ENCODE measurements at regions of chr2 and their contacts with region 1.

Region 1: GRCh38 chr2:135913727-135914365 is 37.6 kb upstream of the MCM6 start:
- DNase-seq: peak in 5 of 7 donors; percentile 18 to 62 (median 36)
- H3K4me3 ChIP-seq: no peak overlapping the region
- H3K27ac ChIP-seq: no peak overlapping the region
- H3K4me1 ChIP-seq: no peaks in the 10 kb centered on the region
- H3K27me3 ChIP-seq: no peaks in the 10 kb centered on the region
- CTCF ChIP-seq: peak; percentile 67 to 83 (median 74)
- POLR2A ChIP-seq: no peak

Region 2: DNA sequence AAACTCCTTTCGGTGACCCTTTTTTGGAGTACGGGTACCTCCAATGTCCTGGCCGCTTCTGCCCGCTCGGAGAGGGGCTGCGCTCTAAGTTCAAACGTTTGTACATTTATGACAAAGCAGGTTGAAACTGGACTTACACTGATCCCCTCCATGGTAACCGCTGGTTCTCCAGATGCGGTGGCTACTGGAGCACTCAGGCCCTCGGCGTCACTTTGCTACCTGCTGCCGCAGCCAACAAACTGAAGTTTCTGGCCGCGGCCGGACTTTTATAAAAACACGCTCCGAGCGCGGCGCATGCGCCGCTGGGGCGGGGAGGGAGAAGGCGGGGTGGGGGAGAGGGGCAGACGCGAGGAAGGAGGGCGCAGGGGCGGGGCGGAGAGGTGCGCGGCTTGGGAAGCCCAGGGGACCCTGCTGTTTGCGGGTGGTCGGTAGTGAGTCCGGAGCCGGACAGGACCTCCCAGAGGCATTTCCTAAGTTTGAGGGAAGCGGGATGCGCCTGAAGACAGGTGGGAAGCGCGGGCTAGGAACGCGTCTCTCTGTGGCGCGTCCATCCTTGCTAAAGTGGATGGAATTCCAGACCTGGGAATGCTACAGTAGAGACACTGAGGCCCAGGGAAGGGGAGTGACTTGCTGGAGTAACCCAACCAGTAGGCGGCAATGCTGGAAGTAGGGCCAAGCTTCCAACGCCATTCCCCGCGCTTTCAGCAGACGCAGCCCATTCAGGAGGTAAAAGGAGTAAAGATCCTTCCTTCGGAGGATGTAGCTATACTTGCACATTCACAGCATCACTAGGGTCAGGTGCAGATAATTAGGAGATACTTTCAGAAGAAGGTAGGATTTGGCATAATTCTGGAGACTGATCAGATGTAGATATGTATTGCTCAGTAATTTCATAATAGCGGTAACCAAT is 204.3 kb after region 1 on chr2 and contains the start of gene CXCR4:
- intact Hi-C with region 1: loop called in 1 of 2 experiments (anchors 10 kb)
- DNase-seq: peak; percentile 76 to 89 (median 81)
- H3K4me3 ChIP-seq: peak within 1 kb of the TSS; percentile 7 to 74 (median 59)
- H3K27ac ChIP-seq: peak within 1 kb of the TSS in 4 of 5 donors; percentile 36 to 75 (median 54)
- H3K4me1 ChIP-seq: peaks cover 10 to 37% of the 10 kb centered on the region in 2 donors
- H3K27me3 ChIP-seq: no peaks in the 10 kb centered on the region
- CTCF ChIP-seq: peak in 2 of 6 experiments; percentile 18 to 25
- POLR2A ChIP-seq: peak; percentile 83 to 94
- total RNA-seq, gene CXCR4: 21.9 to 344 (median 72.8) TPM

Region 3: DNA sequence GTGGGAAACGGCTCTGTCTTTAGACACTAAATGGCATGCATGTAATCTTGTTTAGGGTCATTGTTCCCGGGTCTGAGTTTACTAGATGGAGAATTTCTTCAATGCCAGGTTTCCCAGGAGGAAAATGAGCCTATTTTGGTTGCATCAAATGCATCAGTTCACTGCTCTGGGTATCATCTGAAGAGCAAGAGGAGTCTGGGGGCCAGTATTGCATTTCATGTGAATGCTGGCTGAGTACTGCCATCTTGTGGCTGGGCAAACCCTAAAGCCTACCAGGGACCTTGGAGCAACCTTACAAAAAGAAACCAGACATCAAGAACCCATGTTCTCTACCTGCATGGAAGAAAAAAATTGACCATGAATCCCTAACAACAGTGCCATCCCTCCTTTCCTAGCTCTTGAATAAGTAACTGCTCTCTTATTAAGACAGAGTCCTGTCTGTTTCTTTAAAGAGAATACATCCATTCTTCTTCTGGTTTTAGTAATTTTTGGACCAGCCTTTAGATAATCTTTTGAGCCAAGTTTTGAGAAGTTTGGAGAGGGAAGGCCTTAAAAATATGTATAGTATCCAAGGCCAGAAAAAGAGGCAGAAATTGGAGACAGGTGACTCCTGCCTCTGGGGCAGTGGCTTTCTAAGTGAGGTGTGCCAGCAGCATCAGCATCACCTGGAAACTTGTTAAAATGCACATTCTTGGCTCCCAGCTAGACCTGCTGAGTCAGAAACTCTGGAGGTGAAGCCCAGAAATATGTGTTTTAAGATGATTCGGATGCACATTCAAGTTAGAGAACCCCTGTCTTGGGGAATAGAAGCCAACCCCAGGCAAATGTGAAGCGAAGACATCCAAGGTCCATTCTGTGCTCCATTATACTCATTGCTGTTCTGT is 465.1 kb after region 1 on chr2:
- intact Hi-C with region 1: loop called (anchors 5 kb)
- DNase-seq: peak; percentile 63 to 83 (median 68)
- H3K4me3 ChIP-seq: no peak overlapping the region
- H3K27ac ChIP-seq: no peak overlapping the region
- H3K4me1 ChIP-seq: no peaks in the 10 kb centered on the region
- H3K27me3 ChIP-seq: no peaks in the 10 kb centered on the region
- CTCF ChIP-seq: peak; percentile 66 to 82 (median 76)
- POLR2A ChIP-seq: no peak

Region 4: DNA sequence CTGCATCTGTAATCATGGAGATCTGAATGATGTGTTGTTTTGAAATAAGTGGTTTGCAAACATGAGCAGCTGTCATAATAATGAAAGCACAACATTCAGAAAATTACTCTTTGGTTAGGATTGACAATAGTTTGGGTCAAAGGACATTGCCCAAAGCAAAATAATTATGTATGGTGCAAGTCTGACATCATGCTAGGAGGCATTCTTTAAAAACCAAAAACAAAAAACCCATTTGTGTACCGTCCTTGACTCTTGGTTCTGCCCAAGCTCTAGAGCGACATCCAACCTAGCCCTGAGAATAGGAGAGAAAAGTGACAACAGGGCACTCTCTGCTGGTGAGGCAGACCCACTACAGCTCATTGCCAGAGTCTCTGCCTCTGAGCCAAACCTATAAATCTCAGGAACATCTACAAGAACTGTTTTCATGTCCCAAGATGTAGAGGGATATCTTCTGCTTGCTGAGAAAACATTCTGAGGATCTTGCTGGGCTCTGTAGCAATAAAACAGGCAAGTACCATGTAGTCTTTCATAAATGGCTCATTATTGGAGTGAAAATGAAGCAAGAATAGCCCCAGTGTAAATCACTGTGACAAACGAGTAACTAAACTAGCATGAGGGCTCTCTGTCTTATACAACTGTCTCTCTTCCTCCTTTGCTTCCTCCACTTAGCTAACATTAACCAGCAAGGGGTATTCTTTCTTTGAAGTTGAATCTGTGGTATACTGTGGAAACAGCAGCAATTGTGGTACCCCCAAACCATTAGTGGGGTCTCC is 470.9 kb after region 1 on chr2:
- intact Hi-C with region 1: loop called (anchors 5 kb)
- DNase-seq: peak; percentile 48 to 79 (median 66)
- H3K4me3 ChIP-seq: no peak overlapping the region
- H3K27ac ChIP-seq: no peak overlapping the region
- H3K4me1 ChIP-seq: peaks cover 5 to 18% of the 10 kb centered on the region in 2 donors
- H3K27me3 ChIP-seq: no peaks in the 10 kb centered on the region
- CTCF ChIP-seq: peak; percentile 39 to 83 (median 80)
- POLR2A ChIP-seq: no peak